ENCODE measurements at regions of chr17 and their contacts with region 1.

Region 1: GRCh38 chr17:45235416-45236281 is 14.0 kb downstream of the FMNL1 start:
- DNase-seq: peak; percentile 94
- ATAC-seq: peak; percentile 69
- H3K4me3 Mint-ChIP-seq: no peak overlapping the region
- H3K27ac Mint-ChIP-seq: no peak overlapping the region
- H3K4me1 Mint-ChIP-seq: peaks cover 9% of the 10 kb centered on the region
- H3K27me3 Mint-ChIP-seq: peaks cover 63% of the 10 kb centered on the region
- CTCF ChIP-seq: peak; percentile 81

Region 2: DNA sequence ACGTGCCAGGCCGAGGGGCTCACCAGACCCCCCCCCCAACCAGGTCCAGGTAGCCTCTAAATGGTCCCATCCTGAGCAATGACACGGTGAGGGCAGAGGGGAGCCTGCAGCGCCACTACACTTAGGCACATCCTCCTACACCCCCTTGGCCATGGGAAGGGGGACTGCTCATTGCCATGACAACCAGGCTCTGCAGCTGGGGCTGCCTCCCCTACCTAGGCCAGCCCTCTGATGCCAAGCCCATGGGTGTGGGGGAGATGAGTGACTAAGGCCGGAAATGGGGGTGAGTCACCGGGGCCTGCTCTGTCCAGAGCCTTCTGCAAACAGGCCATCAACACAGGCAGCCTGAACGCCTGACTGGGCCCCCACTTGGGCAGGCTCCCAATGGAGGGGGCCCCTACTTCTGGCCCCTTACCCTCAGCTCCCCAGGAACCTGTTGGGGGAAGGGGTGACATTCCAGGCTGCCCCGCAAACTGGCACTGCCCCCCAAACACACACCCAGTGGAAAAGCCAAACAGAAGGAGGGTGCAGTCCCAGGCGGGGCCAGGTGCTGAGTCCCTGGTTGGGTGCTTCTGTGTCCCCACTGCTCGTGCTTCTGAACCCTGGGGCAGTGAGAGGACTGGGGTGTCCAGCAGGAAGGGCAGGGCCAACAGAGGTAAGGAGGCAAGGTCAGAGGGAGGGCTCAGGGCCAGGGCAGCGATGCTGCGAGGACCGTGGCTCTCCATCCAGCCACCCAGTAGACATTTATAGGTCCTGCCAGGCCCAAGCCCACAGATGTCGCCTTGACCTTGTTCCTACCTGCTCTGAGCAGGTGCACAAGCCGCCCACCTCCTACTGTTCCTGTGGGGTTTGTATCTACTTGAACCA is 111.5 kb before region 1 on chr17:
- CTCF ChIA-PET with region 1: no interaction called
- POLR2A ChIA-PET with region 1: no interaction called
- DNase-seq: no peak
- ATAC-seq: peak; percentile 25
- H3K4me3 Mint-ChIP-seq: no peak overlapping the region
- H3K27ac Mint-ChIP-seq: peak overlapping the region; percentile 65; the same call in 1 of the 2 replicates
- H3K4me1 Mint-ChIP-seq: peaks cover 11% of the 10 kb centered on the region
- H3K27me3 Mint-ChIP-seq: no peaks in the 10 kb centered on the region
- CTCF ChIP-seq: no peak

Region 3: GRCh38 chr17:45256114-45256966 is 20.7 kb after region 1 on chr17:
- CTCF ChIA-PET with region 1: interaction called, 24 read pairs
- POLR2A ChIA-PET with region 1: no interaction called
- DNase-seq: no peak
- ATAC-seq: peak; percentile 46
- H3K4me3 Mint-ChIP-seq: no peak overlapping the region
- H3K27ac Mint-ChIP-seq: no peak overlapping the region
- H3K4me1 Mint-ChIP-seq: peaks cover 18% of the 10 kb centered on the region
- H3K27me3 Mint-ChIP-seq: peaks cover 10% of the 10 kb centered on the region
- CTCF ChIP-seq: no peak

Region 4: DNA sequence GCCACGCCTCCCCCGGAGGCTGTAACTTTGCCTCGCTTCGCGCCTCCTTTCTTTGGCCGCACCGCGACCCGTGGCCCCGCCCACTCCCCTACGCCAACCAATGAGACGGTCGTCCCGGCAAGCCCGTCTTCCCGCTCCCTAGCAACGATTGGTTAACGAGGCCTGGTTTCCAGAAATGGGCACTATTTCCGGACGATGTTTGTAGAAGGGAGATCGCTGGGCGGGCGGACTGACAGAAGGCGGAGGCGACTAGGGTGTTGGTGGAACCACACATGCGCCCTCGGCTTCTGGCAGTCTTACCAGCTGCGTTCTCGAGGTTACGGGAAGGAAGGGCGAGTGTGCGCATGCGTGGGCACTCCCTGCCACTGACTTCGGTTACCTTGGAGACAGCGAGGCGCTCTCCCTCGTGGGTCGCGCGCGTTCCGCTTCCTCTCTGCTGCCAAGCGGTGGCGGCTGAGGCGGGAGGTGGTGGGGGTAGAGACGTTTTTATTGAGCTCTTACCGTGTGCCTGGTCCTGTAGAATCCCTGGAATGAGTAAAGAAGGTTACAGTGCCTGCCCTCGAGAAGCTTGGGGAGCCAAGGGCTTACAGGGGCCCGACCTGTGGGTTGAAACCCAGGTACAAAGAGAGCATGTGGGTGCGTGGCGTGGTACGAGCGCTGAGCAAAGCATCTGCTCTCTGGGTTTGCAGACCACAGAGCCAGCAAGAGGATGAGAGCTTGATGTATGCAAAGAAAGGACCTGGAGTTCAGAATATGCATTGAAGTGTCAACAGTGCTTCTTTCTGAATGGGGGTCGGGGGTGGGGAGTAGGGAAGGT is 81.7 kb after region 1 on chr17:
- CTCF ChIA-PET with region 1: interaction called, 12 read pairs
- POLR2A ChIA-PET with region 1: interaction called, 5 read pairs
- DNase-seq: peak; percentile 100
- ATAC-seq: peak; percentile 92
- H3K4me3 Mint-ChIP-seq: peak overlapping the region; percentile 85
- H3K27ac Mint-ChIP-seq: peak overlapping the region; percentile 90
- H3K4me1 Mint-ChIP-seq: peaks cover 22% of the 10 kb centered on the region
- H3K27me3 Mint-ChIP-seq: peaks cover 37% of the 10 kb centered on the region
- CTCF ChIP-seq: no peak

Region 5: GRCh38 chr17:45705123-45706009 is 469.7 kb after region 1 on chr17:
- CTCF ChIA-PET with region 1: no interaction called
- POLR2A ChIA-PET with region 1: no interaction called
- DNase-seq: no peak
- ATAC-seq: no peak
- H3K4me3 Mint-ChIP-seq: no peak overlapping the region
- H3K27ac Mint-ChIP-seq: no peak overlapping the region
- H3K4me1 Mint-ChIP-seq: peaks cover 21% of the 10 kb centered on the region
- H3K27me3 Mint-ChIP-seq: peaks cover 8% of the 10 kb centered on the region
- CTCF ChIP-seq: no peak